ENCODE measurements at regions of chr12 and their contacts with region 1.

Region 1: DNA sequence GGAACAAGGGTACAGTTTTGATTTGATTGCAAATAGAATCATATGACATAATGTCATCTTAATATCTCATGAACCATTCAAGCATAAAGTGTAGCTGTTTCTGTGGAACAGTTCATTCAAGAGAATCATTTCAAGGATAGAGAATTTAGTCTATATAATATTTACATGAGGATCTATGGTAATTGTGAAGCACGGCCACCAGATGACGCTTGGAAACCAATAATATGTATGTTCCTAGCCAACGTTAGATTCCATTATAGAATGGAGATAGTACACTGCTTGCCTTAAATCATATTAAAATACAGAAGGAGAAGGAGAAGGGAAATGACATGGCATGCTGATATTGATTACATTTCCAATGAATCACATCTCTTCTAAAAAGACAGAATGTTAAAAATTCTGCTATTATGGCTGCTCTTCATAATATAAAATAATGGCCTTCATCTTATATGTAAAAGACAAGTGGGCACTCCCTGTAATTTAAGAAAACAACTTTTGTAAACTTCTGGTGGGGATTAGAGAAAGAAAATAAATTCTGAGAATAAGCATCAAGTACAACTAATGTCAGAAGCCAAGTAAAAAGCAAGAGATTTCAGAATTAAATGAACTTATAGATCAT is 351.0 kb downstream of the NAV3 start:
- DNase-seq: peak; percentile 60
- H3K4me3 ChIP-seq: no peak overlapping the region
- H3K27ac ChIP-seq: no peak overlapping the region
- H3K4me1 ChIP-seq: no peaks in the 10 kb centered on the region
- H3K27me3 ChIP-seq: no peaks in the 10 kb centered on the region
- CTCF ChIP-seq: peak; percentile 76

Region 2: DNA sequence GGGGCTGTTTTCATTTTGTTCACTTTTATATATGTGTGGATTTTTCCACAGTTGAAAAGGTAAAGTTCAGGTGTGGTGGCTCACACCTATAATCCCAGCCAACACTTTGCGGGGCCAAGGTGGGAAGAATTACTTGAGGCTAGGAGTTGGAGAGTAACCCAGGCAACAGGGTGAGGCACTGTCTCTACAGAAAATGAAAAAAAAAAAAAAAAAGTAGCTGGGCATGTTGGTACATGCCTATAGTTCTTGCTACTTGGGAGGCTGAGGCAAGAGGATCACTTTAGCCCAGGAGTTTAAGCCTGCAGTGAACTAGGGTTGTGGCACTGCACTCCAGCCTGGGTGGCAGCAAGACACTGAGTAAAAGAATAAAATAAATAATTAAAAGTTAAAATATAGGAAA is 24.5 kb before region 1 on chr12:
- CTCF ChIA-PET with region 1: no interaction called
- POLR2A ChIA-PET with region 1: no interaction called
- intact Hi-C with region 1: no loop called
- DNase-seq: no peak
- H3K4me3 ChIP-seq: no peak overlapping the region
- H3K27ac ChIP-seq: no peak overlapping the region
- H3K4me1 ChIP-seq: no peaks in the 10 kb centered on the region
- H3K27me3 ChIP-seq: no peaks in the 10 kb centered on the region
- CTCF ChIP-seq: no peak

Region 3: DNA sequence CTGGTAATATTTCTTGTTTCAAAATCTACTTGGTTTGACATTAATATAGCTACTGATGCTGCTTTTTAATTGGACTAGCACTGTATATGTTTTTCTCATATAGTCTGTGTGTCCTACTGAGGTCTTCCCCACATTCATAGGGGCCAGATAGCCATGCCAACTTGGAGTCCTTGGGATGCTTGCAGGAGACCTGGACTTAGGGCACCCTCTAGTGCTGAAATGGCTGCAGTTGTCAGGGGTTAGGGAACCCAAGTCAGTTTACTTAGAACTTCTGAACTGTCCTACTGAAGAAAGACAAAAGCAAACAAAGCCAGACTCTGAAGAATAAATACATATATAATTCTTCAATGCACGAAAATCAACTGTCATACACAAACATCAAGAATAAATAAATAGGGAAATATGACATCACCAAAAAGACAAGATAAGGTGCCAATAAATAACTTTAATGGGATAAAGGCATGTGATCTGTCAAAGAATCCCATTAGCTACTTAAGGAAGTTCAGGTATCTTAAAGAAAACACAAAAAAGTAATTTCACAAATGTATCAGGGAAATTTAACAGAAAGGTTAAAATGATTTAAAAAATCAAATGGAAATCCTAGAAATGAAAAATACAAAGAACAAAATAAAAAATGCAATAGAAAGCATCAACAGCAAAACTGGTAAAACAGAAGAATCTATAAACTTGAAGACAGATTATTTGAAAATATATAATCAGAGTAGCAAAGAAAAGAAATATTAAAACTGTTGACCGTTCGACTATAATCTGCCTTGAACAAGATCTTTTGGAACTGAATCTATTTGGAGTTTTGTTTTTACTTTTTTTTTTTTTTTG is 403.3 kb after region 1 on chr12:
- CTCF ChIA-PET with region 1: no interaction called
- POLR2A ChIA-PET with region 1: no interaction called
- intact Hi-C with region 1: loop called (anchors 5 kb)
- DNase-seq: peak; percentile 46
- H3K4me3 ChIP-seq: no peak overlapping the region
- H3K27ac ChIP-seq: no peak overlapping the region
- H3K4me1 ChIP-seq: peaks cover 7% of the 10 kb centered on the region
- H3K27me3 ChIP-seq: no peaks in the 10 kb centered on the region
- CTCF ChIP-seq: peak; percentile 44

Region 4: DNA sequence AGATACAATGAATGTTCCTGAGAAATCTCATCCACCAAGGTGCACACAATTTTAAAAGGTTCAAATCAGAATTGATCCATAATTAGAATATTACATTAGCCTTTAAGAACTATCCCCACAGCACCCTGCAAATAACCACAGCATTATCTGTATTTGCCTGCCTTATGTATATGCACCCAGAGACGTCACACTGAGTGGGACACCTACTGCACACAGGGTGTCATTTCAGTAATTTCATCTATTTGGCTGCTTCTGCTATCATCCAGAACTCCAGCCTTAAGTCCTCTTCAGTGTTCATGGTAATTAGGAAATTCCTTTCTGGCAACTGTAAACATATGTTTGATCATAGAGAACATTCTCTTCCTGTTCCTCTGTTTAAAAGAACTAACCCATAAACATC is 981.3 kb after region 1 on chr12:
- CTCF ChIA-PET with region 1: no interaction called
- POLR2A ChIA-PET with region 1: no interaction called
- intact Hi-C with region 1: loop called (anchors 10 kb)
- DNase-seq: peak; percentile 42
- H3K4me3 ChIP-seq: no peak overlapping the region
- H3K27ac ChIP-seq: peak overlapping the region; percentile 15
- H3K4me1 ChIP-seq: peaks cover 17% of the 10 kb centered on the region
- H3K27me3 ChIP-seq: no peaks in the 10 kb centered on the region
- CTCF ChIP-seq: peak; percentile 25; the same call in 1 of the 2 replicates

Measured in A673 (cell line).